Ovary (tissue), 10 donors: ENCODE measurements at regions of chr11 and their contacts with region 1.

Region 1: GRCh38 chr11:12281571-12282478 is 95.5 kb upstream of the PARVA start:
- DNase-seq: peak; percentile 70 to 89 (median 87)
- H3K4me3 ChIP-seq: no peak overlapping the region
- H3K27ac ChIP-seq: no peak overlapping the region
- H3K4me1 ChIP-seq: peaks cover 5% of the 10 kb centered on the region
- H3K27me3 ChIP-seq: no peaks in the 10 kb centered on the region
- CTCF ChIP-seq: peak; percentile 86 to 98 (median 97)
- EP300 ChIP-seq: no peak
- POLR2A ChIP-seq: peak; percentile 14

Region 2: DNA sequence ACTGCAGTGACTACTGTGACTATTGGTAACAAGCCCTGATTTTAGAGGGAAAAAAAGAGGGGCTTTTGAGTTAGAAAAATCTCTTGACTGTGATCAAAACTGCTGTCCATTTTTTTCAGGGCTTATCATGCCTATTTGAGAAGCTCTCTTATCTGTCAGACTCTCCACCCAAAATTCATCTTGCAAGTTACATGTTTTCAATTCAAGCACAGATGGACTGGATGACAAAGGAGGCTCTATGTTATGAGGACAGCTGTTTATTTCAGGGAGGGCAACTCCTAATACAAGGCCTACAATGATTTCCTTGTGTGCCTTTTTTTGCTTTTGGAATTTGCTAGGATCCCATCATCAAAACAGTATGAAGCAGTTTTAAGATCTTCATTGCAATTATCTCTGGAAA is 475.2 kb before region 1 on chr11:
- intact Hi-C with region 1: loop called in 2 of 4 experiments (anchors 10 kb)
- DNase-seq: no peak
- H3K4me3 ChIP-seq: no peak overlapping the region
- H3K27ac ChIP-seq: no peak overlapping the region
- H3K4me1 ChIP-seq: no peaks in the 10 kb centered on the region
- H3K27me3 ChIP-seq: no peaks in the 10 kb centered on the region
- CTCF ChIP-seq: no peak
- EP300 ChIP-seq: no peak
- POLR2A ChIP-seq: no peak

Region 3: DNA sequence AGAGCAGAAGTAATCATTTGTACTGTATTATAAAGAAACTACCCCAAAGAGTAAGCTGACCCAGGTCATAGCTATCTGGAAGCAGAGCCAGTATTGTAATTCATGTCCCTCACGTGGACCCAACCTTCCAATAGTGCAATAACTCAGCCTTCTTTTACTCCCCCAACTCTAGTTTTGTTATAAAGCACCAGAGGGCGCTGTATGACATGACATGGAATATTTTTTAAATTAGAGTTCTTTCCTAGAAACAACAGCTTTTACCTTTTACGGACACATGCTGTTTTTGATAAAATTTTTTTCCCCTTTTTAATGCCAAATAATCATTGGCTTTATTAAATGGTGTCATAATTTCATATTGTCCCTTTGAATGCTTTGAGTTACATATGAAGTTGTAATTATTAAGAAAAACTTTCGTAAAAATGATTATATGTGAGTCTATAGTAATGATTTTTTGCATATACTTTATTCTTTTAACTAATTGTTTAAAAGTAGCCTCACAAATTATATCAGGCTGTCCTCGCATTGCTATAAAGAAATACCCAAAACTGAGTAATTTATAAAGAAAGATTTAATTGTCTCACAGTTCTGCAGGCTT is 350.3 kb before region 1 on chr11:
- intact Hi-C with region 1: loop called in 2 of 4 experiments (anchors 5 to 10 kb)
- DNase-seq: peak in 1 of 5 donors; percentile 22
- H3K4me3 ChIP-seq: no peak overlapping the region
- H3K27ac ChIP-seq: no peak overlapping the region
- H3K4me1 ChIP-seq: no peaks in the 10 kb centered on the region
- H3K27me3 ChIP-seq: no peaks in the 10 kb centered on the region
- CTCF ChIP-seq: peak; percentile 34 to 65 (median 65)
- EP300 ChIP-seq: no peak
- POLR2A ChIP-seq: no peak

Region 4: DNA sequence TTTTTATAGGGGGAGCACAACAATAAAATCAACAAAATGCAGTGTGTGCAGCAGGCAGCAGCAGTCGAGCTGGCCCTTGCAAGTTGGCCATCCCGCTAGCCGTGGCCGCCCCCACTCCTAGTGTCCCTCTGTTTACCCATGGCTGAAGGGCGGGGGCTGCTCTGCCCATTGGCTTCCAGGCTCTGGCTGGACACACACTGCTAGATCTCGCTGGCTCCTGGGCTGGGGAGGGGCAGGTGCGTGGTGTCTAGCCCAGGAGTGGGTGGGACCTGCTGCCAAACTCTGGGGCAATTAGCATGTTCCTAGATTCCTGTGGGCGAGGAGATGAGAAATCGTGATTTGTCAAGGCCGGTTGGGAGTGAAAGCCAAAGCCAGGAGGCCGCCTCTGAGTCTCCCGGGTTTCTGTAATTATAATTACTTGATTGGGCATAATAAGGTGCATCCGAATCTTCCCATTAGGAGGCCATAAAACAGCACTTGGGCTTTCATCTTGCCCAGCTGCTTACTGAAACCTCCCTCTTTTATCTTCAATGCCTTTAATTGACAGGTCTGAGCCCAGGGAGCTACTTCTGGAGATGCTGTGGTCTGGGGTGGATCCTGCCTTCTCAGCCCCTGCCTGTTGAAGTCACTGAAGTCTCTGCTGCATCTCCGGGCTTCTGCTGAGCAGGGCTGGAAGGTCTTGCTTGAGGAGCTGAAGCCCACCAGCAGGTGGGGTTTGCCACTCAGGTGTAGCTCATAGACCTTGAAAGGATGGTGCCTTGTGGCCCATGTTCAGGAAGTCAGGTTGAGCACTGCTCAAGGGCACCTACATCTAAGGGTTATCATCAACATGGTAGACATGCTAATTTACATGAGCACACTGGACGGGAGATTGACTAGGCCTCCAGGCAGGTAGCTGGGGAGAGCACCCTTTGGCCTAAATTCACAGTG is 228.9 kb before region 1 on chr11:
- intact Hi-C with region 1: loop called in 2 of 4 experiments (anchors 2 kb)
- DNase-seq: no peak
- H3K4me3 ChIP-seq: no peak overlapping the region
- H3K27ac ChIP-seq: no peak overlapping the region
- H3K4me1 ChIP-seq: no peaks in the 10 kb centered on the region
- H3K27me3 ChIP-seq: no peaks in the 10 kb centered on the region
- CTCF ChIP-seq: no peak
- EP300 ChIP-seq: no peak
- POLR2A ChIP-seq: no peak